ENCODE measurements at regions of chr17 and their contacts with region 1.

Region 1: DNA sequence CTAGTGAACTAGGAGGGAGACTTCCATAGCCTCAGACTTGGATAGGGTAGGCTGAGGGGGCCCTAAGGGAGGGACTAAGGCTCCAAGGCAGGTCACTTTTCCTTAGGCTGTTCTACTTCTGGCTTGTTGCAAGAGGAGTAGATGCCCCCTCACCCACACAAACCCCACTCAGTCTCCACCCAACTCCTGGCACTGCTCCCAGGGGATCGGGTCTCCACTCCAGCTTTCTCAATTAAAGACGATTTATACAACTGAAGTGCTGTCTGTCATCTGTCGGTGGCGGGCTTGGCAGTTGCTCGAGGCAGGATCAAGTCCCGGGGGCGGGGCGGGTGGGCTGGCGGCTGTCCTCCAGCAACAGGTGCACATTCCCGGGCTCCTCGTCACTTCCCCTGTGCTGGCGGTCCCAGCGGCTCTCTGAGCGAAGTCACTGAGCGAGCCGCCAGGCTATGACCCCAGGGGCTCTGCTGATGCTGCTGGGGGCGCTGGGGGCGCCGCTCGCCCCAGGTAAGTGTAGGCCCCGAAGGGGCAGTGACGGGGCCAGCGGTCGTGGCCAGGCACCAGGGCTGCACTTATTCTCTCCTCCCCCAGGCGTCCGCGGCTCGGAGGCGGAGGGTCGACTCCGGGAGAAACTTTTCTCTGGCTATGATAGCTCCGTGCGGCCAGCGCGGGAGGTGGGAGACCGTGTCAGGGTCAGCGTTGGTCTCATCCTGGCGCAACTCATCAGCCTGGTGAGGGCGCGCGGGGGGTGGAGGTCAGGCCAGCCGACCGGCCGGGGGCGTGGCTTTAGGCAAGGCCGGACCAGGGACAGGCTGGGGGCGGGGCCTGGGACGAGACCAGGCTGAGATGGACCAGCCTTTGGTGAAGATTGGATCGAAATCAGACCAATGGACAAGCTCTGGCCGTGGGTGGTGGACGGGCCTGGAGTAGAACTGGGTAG is at the start of gene CHRNB1:
- DNase-seq: peak; percentile 70 to 94
- H3K4me3 ChIP-seq: peak within 1 kb of the TSS; percentile 71
- H3K27ac ChIP-seq: peak within 1 kb of the TSS; percentile 75
- H3K4me1 ChIP-seq: peaks cover 12% of the 10 kb centered on the region
- H3K27me3 ChIP-seq: no peaks in the 10 kb centered on the region
- CTCF ChIP-seq: no peak
- total RNA-seq, gene CHRNB1: 31.9 and 53.4 TPM in 2 replicates

Region 2: DNA sequence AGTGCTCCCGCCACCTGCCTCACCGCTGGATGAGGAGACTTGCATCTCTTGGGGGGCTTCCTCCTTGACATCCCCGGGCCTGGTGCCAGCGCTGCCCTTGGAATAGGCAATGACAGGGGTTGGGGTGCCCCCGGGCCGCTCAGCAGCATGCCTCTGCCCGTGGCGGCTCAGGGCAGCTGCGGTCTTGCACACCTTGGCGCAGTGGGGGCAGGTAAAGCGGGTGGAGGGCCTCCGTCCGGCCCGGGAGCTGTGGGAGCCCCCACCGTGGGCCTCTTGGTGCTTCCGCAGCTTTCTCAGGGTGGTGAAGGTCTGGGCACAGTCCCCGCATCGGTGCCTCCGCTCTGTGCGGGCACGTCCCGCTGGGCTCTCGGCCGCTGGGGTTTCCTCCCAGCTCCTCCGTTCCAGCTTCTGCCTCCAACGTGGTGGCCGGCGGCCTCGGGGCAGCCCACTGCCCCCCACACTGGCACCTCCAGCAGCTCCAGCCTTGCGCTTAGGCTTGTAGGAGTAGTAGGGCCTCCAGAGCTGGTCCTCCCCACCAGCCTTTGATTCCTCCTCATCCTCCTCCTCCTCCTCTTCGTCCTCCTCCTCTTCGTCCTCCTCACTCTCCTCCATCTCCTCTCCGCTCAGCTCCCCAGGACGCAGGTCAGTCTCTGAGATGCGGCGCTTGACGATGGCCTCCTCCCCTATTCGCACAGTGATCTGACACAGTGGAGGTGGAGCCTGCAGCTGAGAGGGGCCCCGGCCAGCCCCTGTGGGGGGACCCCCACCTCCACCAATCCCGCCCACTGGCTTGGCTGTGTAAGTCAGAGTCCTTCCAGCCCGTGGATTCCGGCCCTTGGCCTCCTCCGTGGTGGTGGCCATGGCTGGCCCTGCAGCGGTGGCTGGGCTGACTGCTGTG is 17.8 kb after region 1 on chr17:
- CTCF ChIA-PET with region 1: no interaction called
- POLR2A ChIA-PET with region 1: interaction called, 21 read pairs
- intact Hi-C with region 1: no loop called
- DNase-seq: no peak
- H3K4me3 ChIP-seq: no peak overlapping the region
- H3K27ac ChIP-seq: no peak overlapping the region
- H3K4me1 ChIP-seq: no peaks in the 10 kb centered on the region
- H3K27me3 ChIP-seq: no peaks in the 10 kb centered on the region
- CTCF ChIP-seq: no peak

Region 3: DNA sequence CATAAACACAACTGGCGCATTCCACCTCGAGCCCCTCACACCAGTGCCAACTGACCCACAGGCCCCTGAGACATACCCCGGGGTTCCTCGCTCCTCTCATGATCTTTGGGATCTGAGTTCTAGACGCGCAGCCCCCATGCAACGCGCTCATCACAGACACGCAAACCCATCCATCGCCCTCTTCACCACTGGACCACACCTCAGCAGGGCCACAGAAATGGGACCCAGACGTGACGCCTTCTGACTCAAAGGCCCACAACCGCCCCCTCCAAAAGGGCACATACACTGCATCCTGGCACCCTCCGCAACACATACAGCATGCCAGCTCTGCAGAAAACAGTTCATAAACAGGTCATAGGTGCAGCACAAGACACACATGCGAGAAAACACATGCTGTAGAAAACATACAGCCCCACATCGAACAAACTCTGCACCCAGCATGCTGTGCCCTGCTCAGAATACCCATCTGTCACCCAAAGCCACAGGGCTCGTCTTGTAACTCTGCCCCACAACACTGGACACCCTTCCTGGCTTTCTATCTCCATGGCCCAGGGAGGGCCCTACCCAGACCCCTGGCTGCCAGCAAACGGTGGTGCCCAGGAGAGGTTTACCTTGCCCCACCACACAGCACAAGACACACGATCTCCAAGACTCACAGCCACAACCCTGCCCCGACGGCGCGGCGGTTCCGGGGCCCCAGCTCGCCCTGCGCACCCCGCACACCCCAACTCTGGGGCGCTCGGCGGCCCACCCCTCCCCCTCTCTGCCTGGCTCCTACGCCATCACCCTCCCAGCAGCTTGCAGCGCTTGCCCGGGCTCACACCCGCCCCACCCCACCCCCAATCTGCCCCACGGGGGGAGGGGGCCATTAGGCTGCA is 33.6 kb after region 1 on chr17:
- CTCF ChIA-PET with region 1: interaction called, 10 read pairs
- POLR2A ChIA-PET with region 1: interaction called, 26 read pairs
- intact Hi-C with region 1: loop called (anchors 2 kb)
- DNase-seq: peak in 1 of 2 experiments; percentile 45
- H3K4me3 ChIP-seq: peak overlapping the region; percentile 76
- H3K27ac ChIP-seq: no peak overlapping the region
- H3K4me1 ChIP-seq: peaks cover 37% of the 10 kb centered on the region
- H3K27me3 ChIP-seq: no peaks in the 10 kb centered on the region
- CTCF ChIP-seq: no peak

Region 4: DNA sequence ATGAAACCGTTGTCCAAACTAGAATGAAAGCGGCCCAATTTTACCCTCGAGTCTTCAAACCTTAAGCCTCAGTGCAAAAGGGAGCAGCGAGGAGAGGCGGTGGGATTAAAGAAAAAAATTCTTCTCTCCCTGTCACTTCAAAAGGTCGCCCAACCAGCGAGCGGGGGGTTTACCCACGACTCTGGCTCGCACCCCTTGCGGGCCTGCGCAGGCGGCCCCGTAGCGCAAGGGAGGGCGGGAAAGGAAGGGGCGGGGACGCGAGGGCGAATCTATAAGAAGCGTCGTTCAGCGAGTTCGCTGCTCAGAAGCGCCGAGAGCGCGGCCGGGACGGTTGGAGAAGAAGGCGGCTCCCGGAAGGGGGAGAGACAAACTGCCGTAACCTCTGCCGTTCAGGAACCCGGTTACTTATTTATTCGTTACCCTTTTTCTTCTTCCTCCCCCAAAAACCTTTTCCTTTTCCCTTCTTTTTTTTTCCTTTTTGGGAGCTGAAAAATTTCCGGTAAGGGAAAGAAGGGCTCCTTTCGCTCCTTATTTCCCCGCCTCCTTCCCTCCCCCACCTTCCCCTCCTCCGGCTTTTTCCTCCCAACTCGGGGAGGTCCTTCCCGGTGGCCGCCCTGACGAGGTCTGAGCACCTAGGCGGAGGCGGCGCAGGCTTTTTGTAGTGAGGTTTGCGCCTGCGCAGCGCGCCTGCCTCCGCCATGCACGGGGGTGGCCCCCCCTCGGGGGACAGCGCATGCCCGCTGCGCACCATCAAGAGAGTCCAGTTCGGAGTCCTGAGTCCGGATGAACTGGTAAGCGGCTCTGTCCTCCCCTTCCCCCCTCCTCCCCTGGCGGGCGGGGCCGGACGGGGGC is 39.3 kb after region 1 on chr17 and contains the start of gene POLR2A:
- CTCF ChIA-PET with region 1: no interaction called
- POLR2A ChIA-PET with region 1: interaction called, 26 read pairs
- intact Hi-C with region 1: loop called (anchors 1 kb)
- DNase-seq: peak; percentile 79 to 99
- H3K4me3 ChIP-seq: peak within 1 kb of the TSS; percentile 88
- H3K27ac ChIP-seq: peak within 1 kb of the TSS; percentile 95
- H3K4me1 ChIP-seq: peaks cover 18% of the 10 kb centered on the region
- H3K27me3 ChIP-seq: no peaks in the 10 kb centered on the region
- CTCF ChIP-seq: no peak
- total RNA-seq, gene POLR2A: 149 and 166 TPM in 2 replicates

Region 5: GRCh38 chr17:7515911-7516610 is 71.1 kb after region 1 on chr17:
- CTCF ChIA-PET with region 1: no interaction called
- POLR2A ChIA-PET with region 1: no interaction called
- intact Hi-C with region 1: no loop called
- DNase-seq: no peak
- H3K4me3 ChIP-seq: no peak overlapping the region
- H3K27ac ChIP-seq: no peak overlapping the region
- H3K4me1 ChIP-seq: no peaks in the 10 kb centered on the region
- H3K27me3 ChIP-seq: no peaks in the 10 kb centered on the region
- CTCF ChIP-seq: no peak

Region 6: DNA sequence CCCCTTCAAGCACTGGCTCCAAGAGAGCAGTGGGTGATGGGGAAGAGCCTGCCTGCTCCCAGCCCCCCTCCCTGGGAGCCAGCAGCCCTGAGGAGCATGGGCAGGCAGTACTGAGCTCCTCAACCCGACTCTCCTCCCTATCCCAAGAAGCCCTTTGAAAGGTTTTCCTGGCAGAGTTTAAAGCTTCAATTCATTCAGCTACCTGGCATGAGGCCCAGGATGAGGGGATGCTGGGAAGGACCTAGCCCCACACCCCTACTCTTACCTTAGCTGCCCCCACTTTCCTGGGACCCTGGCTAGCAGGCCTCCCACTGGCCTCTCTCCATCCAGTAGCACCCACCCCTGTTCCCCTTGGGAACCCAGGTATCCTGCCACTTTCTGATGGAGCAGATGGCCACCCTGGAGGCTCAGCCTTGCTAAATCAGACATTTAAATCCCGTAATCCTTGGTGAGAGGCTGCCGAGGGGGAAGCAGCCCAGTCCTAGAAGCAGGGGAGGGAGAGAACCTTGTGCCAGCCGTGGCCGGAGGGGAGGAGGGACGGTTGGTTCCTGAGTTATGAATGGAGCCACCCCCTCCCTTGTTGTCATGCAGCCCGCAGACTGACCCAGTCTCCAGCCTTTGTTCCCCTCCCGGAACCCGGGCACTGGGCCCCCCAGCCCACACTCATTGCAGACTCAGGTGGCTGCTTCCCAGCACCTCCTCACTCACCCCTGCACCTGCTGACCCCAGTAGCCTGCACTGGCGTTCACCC is 222.9 kb after region 1 on chr17:
- CTCF ChIA-PET with region 1: no interaction called
- POLR2A ChIA-PET with region 1: interaction called, 12 read pairs
- intact Hi-C with region 1: no loop called
- DNase-seq: no peak
- H3K4me3 ChIP-seq: no peak overlapping the region
- H3K27ac ChIP-seq: no peak overlapping the region
- H3K4me1 ChIP-seq: no peaks in the 10 kb centered on the region
- H3K27me3 ChIP-seq: no peaks in the 10 kb centered on the region
- CTCF ChIP-seq: no peak